ENCODE measurements at regions of chr17 and their contacts with region 1.

Region 1: GRCh38 chr17:31690151-31690551 is 168.9 kb downstream of the COPRS start:
- DNase-seq: no peak

Region 2: DNA sequence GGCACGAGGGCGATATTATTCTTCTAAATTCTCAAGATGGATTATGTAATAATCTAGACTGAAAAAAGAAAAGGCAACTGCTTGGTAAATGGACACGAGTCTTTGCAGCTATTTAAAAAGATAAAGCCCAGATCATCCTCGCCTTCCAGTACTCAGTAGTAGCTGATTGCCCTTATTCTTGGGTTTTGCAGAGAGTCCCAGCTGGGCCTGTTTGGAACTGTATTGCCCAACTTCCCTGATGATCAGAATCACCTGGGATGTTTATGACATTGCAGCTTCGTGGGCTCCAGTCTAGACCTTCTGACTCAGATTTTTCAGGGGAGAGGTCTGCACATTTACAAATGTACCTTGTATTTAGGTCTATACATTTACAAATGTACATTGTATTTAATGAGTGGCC is 85.2 kb before region 1 on chr17:
- intact Hi-C with region 1: loop called (anchors 5 kb)
- DNase-seq: peak in 1 of 10 donors; percentile 29